ENCODE measurements at regions of chr11 and their contacts with region 1.

Region 1: GRCh38 chr11:6481012-6481923 is at the starts of genes ARFIP2 and TIMM10B:
- DNase-seq: peak; percentile 97 to 98
- H3K4me3 ChIP-seq: peak within 1 kb of the TSS; percentile 88
- H3K4me3 Mint-ChIP-seq: peak within 1 kb of the TSS; percentile 97
- H3K27ac Mint-ChIP-seq: peak within 1 kb of the TSS; percentile 99
- H3K4me1 ChIP-seq: peaks cover 42% of the 10 kb centered on the region
- H3K4me1 Mint-ChIP-seq: peaks cover 23% of the 10 kb centered on the region
- H3K27me3 ChIP-seq: no peaks in the 10 kb centered on the region
- H3K27me3 Mint-ChIP-seq: no peaks in the 10 kb centered on the region
- CTCF ChIP-seq: no peak
- total RNA-seq, gene ARFIP2: 94.6 and 100 TPM in 2 replicates
- total RNA-seq, gene TIMM10B: 52.4 and 53.1 TPM in 2 replicates

Region 2: GRCh38 chr11:6505577-6506240 is 24.4 kb after region 1 on chr11:
- CTCF ChIA-PET with region 1: interaction called, 4 read pairs
- POLR2A ChIA-PET with region 1: no interaction called
- intact Hi-C with region 1: loop called (anchors 1 kb)
- DNase-seq: peak in 1 of 2 experiments; percentile 48
- H3K4me3 ChIP-seq: no peak overlapping the region
- H3K4me3 Mint-ChIP-seq: no peak overlapping the region
- H3K27ac Mint-ChIP-seq: no peak overlapping the region
- H3K4me1 ChIP-seq: no peaks in the 10 kb centered on the region
- H3K4me1 Mint-ChIP-seq: peaks cover 5% of the 10 kb centered on the region
- H3K27me3 ChIP-seq: no peaks in the 10 kb centered on the region
- H3K27me3 Mint-ChIP-seq: no peaks in the 10 kb centered on the region
- CTCF ChIP-seq: peak; percentile 83 to 84

Region 3: GRCh38 chr11:6568191-6568918 is 87.1 kb after region 1 on chr11:
- CTCF ChIA-PET with region 1: no interaction called
- POLR2A ChIA-PET with region 1: no interaction called
- intact Hi-C with region 1: no loop called
- DNase-seq: no peak
- H3K4me3 ChIP-seq: no peak overlapping the region
- H3K4me3 Mint-ChIP-seq: no peak overlapping the region
- H3K27ac Mint-ChIP-seq: peak overlapping the region; percentile 31
- H3K4me1 ChIP-seq: no peaks in the 10 kb centered on the region
- H3K4me1 Mint-ChIP-seq: no peaks in the 10 kb centered on the region
- H3K27me3 ChIP-seq: no peaks in the 10 kb centered on the region
- H3K27me3 Mint-ChIP-seq: no peaks in the 10 kb centered on the region
- CTCF ChIP-seq: no peak

Measured in Caco-2 (cell line).